Activated CD4-positive, alpha-beta T cell treated with anti-CD3 and anti-CD28 coated beads for 36 hours (primary cell): ENCODE measurements at regions of chr6 and their contacts with region 1.

Region 1: GRCh38 chr6:53794720-53795253 is at the start of gene LRRC1:
- DNase-seq: peak; percentile 90
- ATAC-seq: peak; percentile 75
- H3K4me3 Mint-ChIP-seq: peak within 1 kb of the TSS; percentile 90
- H3K27ac Mint-ChIP-seq: peak within 1 kb of the TSS; percentile 83
- H3K4me1 Mint-ChIP-seq: peaks cover 17% of the 10 kb centered on the region
- H3K27me3 Mint-ChIP-seq: peaks cover 22% of the 10 kb centered on the region
- total RNA-seq, gene LRRC1: 2.3 to 3.1 TPM

Region 2: GRCh38 chr6:52297433-52297832 is 1497.4 kb before region 1 on chr6:
- CTCF ChIA-PET with region 1: no interaction called
- POLR2A ChIA-PET with region 1: no interaction called
- intact Hi-C with region 1: loop called in 1 of 2 experiments (anchors 5 kb)
- DNase-seq: no peak
- ATAC-seq: peak; percentile 10
- H3K4me3 Mint-ChIP-seq: peak overlapping the region; percentile 20
- H3K27ac Mint-ChIP-seq: peak overlapping the region; percentile 93
- H3K4me1 Mint-ChIP-seq: peaks cover 43% of the 10 kb centered on the region
- H3K27me3 Mint-ChIP-seq: no peaks in the 10 kb centered on the region

Region 3: GRCh38 chr6:52361945-52362442 is 1432.8 kb before region 1 on chr6 and contains the start of gene PAQR8:
- CTCF ChIA-PET with region 1: no interaction called
- POLR2A ChIA-PET with region 1: no interaction called
- intact Hi-C with region 1: loop called in 1 of 2 experiments (anchors 10 kb)
- DNase-seq: peak; percentile 88
- ATAC-seq: peak; percentile 89
- H3K4me3 Mint-ChIP-seq: peak within 1 kb of the TSS; percentile 99
- H3K27ac Mint-ChIP-seq: peak within 1 kb of the TSS; percentile 94
- H3K4me1 Mint-ChIP-seq: peaks cover 42% of the 10 kb centered on the region
- H3K27me3 Mint-ChIP-seq: no peaks in the 10 kb centered on the region
- total RNA-seq, gene PAQR8: 9.0 to 9.1 TPM

Region 4: DNA sequence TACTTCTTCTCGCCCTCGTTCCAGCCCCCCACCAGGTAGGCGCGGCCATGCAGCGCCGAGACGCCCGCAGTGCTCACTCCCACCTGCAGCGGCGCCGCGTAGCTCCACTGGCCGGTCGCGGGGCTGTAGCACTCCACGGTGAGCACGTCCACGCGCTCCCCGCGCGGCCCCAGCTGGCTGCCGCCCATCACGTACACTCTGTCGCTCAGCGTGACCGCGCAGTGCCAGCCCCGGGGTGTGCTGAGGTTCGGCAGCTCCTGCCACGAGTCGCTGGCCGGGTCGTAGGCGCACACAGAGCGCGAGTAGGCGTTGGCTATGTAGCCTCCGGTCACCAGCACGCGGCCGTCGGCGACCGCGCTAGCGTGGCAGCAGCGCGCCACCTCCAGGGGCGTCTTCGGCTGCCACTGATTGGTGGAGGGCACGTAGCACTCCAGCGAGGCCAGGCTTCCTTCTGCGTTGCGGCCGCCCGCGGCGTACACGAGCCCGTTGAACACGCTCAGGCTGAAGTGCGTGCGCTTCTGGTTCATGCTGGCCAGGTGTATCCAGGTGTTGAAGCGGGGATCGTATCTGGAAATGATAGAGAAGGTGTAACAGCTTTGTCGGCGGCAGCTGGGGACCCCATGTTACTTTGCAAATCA is 142.9 kb before region 1 on chr6:
- CTCF ChIA-PET with region 1: no interaction called
- POLR2A ChIA-PET with region 1: no interaction called
- intact Hi-C with region 1: loop called in 1 of 2 experiments (anchors 2 kb)
- DNase-seq: peak; percentile 87
- ATAC-seq: peak; percentile 95
- H3K4me3 Mint-ChIP-seq: peak overlapping the region; percentile 81
- H3K27ac Mint-ChIP-seq: peak overlapping the region; percentile 82
- H3K4me1 Mint-ChIP-seq: peaks cover 28% of the 10 kb centered on the region
- H3K27me3 Mint-ChIP-seq: no peaks in the 10 kb centered on the region

Region 5: DNA sequence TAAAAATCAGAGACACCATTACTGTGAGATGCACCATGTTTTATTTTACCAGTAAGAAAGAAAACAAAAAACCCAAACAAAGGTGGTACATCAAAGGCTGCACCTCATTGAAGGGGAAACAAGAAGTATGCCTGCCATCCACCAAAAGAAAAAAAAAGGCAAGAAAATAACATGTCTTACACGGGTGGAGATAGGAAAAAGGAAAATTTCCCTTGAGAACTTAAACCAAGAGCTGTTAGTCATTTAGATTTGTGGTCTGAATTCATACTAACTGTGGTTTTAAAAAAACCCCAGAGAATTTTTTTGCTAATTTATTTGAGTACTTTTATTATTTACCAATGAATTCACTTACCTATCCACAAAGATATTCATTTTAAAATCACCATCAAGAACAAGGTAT is 144.0 kb after region 1 on chr6:
- CTCF ChIA-PET with region 1: interaction called, 3 read pairs
- POLR2A ChIA-PET with region 1: no interaction called
- intact Hi-C with region 1: loop called in 1 of 2 experiments (anchors 5 kb)
- DNase-seq: no peak
- ATAC-seq: no peak
- H3K4me3 Mint-ChIP-seq: no peak overlapping the region
- H3K27ac Mint-ChIP-seq: no peak overlapping the region
- H3K4me1 Mint-ChIP-seq: peaks cover 8% of the 10 kb centered on the region
- H3K27me3 Mint-ChIP-seq: peaks cover 3% of the 10 kb centered on the region

Region 6: DNA sequence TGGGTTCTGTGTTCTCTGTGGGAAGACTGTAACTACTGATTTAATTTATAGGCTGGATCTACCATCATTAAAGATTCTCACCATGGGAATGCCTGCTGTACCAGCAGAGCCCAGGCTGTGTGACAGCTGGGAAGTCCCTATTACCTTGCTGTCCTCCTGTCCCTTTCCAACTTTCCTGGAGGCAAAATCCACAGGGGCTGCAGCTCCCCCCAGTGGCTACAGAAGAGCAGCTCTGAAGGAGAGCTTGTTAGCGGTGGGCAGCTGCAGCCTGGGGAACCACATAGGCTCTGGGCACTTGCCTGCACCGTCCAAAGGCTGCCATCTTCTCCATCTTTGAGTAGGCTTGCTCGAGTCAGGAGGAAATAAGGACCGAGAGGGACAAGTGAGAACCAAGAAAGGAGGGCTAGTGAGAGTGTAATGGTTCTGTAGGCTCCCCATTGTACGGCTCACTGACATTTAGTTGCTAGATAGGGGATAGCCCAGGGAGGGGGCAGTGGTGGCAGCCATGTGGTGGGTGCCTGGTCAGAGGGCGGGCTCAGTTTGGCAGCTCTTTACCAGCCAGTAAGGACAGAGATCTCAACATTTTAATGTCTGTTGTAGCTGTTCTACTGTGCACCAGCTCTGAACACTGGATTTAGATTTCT is 161.4 kb after region 1 on chr6:
- CTCF ChIA-PET with region 1: interaction called, 17 read pairs
- POLR2A ChIA-PET with region 1: interaction called, 4 read pairs
- intact Hi-C with region 1: loop called (anchors 1 to 2 kb)
- DNase-seq: peak; percentile 64
- ATAC-seq: peak; percentile 72
- H3K4me3 Mint-ChIP-seq: no peak overlapping the region
- H3K27ac Mint-ChIP-seq: no peak overlapping the region
- H3K4me1 Mint-ChIP-seq: no peaks in the 10 kb centered on the region
- H3K27me3 Mint-ChIP-seq: no peaks in the 10 kb centered on the region

Region 7: GRCh38 chr6:54173089-54173488 is 378.3 kb after region 1 on chr6:
- CTCF ChIA-PET with region 1: no interaction called
- POLR2A ChIA-PET with region 1: no interaction called
- intact Hi-C with region 1: no loop called
- DNase-seq: no peak
- ATAC-seq: no peak
- H3K4me3 Mint-ChIP-seq: no peak overlapping the region
- H3K27ac Mint-ChIP-seq: no peak overlapping the region
- H3K4me1 Mint-ChIP-seq: no peaks in the 10 kb centered on the region
- H3K27me3 Mint-ChIP-seq: no peaks in the 10 kb centered on the region